Activated CD8-positive, alpha-beta T cell treated with anti-CD3 and anti-CD28 coated beads, Interleukin-2, amount 10 ng/mL, durations not matched to agents 7 days and 5 days (primary cell): ENCODE measurements at regions of chr1 and their contacts with region 1.

Region 1: DNA sequence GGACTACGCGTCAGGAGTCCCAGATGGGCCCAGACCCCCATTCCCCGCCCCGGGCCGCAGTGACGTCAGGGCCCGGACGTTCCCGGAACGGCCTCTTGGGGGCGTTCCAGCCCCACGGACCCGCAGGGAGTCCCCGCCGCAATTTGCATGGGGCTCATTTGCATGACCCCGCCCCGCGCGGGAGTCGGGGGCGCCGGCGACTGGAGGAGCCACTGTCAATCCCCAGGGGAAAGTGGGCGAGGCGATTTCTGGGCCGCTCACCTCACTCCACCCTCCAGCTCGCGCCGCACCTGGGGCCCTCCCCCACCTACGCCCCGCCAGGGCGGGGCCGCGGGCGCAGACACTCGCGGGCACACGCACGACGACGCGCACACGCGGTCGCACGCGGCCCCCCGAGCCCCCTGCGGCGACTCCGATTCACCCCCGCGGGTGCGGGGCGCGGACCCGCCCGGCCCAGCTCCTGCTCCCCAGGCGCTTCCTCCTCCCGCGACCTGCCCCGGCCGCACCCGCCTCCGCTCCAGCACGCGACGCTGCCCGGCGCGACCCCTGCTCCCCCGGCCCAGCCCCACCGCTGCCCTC is 13.2 kb downstream of the AGRN start:
- DNase-seq: peak; percentile 95
- ATAC-seq: peak; percentile 93
- H3K4me3 Mint-ChIP-seq: peak overlapping the region; percentile 46
- H3K27ac Mint-ChIP-seq: no peak overlapping the region
- H3K4me1 Mint-ChIP-seq: peaks cover 12% of the 10 kb centered on the region
- H3K27me3 Mint-ChIP-seq: peaks cover 2% of the 10 kb centered on the region

Region 2: DNA sequence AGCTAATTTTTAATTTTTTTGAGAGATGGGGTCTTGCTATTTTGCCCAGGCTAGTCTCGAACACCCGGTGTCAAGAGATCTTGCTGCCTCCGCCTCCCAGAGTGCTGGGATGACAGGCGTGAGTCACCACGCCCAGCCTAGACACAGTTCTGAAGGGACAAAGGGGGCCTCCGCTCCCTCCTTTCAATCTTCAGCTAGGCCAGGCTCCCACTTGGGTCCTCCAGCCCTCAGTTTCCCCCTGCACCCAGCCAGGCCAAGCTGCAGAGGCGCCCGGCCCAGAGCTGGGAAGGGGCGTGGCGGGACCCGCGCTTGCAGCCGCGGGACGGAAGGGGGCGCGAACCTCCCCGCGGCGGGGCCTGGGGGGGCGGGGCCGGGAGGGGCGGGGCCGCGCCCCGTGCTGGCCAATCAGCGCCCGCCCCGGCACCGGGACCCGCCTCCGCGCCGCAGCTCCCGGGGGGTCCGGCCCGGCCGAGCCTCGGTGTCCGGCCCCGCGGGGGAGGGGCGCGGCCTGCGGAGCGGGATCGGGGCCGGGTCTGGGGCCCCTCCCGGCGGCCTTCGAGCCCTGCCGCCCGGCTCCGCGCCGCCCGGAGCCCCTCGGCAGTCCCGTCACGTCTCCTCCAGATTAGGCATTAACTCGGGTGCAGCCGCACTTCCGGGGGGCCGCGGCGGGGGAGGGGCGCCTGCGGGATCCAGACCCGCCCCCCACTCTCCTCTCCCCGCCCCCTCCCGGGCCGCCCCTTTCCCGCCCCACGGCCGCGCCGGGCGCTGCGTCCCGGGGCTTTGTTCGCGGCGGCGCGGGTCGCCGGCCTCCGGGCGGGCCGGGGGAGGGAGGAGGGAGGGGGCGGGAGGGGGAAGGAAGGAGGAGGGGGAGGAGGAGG is 13.7 kb before region 1 on chr1:
- CTCF ChIA-PET with region 1: interaction called, 14 read pairs
- POLR2A ChIA-PET with region 1: interaction called, 4 read pairs
- DNase-seq: peak; percentile 86
- ATAC-seq: peak; percentile 80
- H3K4me3 Mint-ChIP-seq: peak overlapping the region; percentile 65
- H3K27ac Mint-ChIP-seq: peak overlapping the region; percentile 69
- H3K4me1 Mint-ChIP-seq: peaks cover 41% of the 10 kb centered on the region
- H3K27me3 Mint-ChIP-seq: peaks cover 4% of the 10 kb centered on the region

Region 3: GRCh38 chr1:1291548-1292441 is 258.7 kb after region 1 on chr1:
- CTCF ChIA-PET with region 1: interaction called, 13 read pairs
- POLR2A ChIA-PET with region 1: no interaction called
- DNase-seq: peak; percentile 78
- ATAC-seq: peak; percentile 87
- H3K4me3 Mint-ChIP-seq: no peak overlapping the region
- H3K27ac Mint-ChIP-seq: no peak overlapping the region
- H3K4me1 Mint-ChIP-seq: peaks cover 6% of the 10 kb centered on the region
- H3K27me3 Mint-ChIP-seq: no peaks in the 10 kb centered on the region